GM12878 (cell line): ENCODE measurements at regions of chr9 and their contacts with region 1.

Region 1: DNA sequence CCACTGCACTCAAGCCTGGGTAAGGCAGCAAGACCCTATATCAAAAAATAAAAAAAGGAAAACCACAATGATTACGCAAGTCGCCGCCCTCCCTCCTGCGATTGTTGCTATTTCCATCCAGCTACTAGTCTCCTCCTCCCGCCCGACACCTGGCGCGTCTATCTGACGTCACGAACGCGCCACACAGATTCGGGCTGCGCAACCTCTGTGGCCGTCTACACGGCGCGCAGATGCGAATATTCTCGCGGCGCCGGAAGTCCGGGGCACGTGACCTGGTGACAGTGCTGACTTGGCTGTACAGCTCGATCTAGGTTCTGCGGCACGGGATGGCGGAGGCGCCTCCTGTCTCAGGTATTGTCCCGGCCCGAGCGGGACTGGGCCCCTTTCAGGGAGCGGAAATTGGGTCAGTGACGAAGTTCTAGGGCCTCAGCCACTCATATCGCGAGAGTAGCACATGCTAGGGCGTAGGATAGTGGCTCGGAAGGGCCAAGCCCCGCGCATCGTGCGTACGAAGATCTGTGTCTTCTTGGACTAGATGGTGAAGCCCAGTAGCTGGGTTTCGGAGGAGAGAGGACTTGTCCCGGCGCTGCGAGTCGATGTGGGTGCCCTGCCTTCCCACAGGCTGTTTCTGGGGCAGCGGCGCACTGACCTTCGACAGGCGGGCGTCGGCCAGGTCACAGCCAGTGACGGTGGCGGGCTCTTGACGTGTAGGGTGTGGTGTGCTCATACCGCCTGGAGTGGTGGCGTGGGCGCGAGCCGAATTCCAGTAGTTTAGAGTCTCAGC is at the start of gene NFX1:
- DNase-seq: peak; percentile 94
- ATAC-seq: peak; percentile 92
- H3K4me3 ChIP-seq: peak within 1 kb of the TSS; percentile 77
- H3K27ac ChIP-seq: peak within 1 kb of the TSS; percentile 100
- H3K4me1 ChIP-seq: peaks cover 16% of the 10 kb centered on the region
- H3K27me3 ChIP-seq: no peaks in the 10 kb centered on the region
- CTCF ChIP-seq: no peak
- EP300 ChIP-seq: peak in 1 of 2 experiments; percentile 43; a peak in 1 of 4 replicates
- POLR2A ChIP-seq: peak; percentile 98
- RAD21 ChIP-seq: no peak
- polyA plus RNA-seq, gene NFX1: 11.9 to 18.6 TPM

Region 2: DNA sequence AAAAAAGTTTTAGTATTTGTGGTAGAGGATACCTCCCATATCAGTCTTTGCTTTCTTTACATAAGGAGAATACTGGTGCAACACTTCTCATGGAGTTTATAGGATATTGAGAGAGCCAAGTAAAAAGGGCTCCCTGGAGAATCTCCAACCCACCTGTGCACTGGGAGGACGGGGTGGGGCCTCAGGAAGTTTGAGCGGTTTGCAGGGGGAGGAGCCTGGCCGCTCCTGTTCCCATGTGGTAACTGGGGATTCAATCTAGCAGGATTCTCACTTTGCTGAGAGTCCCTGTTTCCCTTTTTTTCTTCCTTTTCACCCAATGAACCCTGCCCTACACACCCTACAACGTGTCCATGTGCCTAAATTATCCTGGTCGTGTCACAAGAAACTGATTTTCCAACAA is 371.8 kb before region 1 on chr9:
- CTCF ChIA-PET with region 1: no interaction called
- POLR2A ChIA-PET with region 1: no interaction called
- RAD21 ChIA-PET with region 1: no interaction called
- SMC1A ChIA-PET with region 1: no interaction called
- in situ Hi-C with region 1: no loop called
- intact Hi-C with region 1: no loop called
- DNase-seq: no peak
- ATAC-seq: no peak
- H3K4me3 ChIP-seq: no peak overlapping the region
- H3K27ac ChIP-seq: no peak overlapping the region
- H3K4me1 ChIP-seq: no peaks in the 10 kb centered on the region
- H3K27me3 ChIP-seq: no peaks in the 10 kb centered on the region; a peak in 1 of 4 replicates
- CTCF ChIP-seq: no peak
- EP300 ChIP-seq: no peak
- POLR2A ChIP-seq: no peak
- RAD21 ChIP-seq: no peak

Region 3: DNA sequence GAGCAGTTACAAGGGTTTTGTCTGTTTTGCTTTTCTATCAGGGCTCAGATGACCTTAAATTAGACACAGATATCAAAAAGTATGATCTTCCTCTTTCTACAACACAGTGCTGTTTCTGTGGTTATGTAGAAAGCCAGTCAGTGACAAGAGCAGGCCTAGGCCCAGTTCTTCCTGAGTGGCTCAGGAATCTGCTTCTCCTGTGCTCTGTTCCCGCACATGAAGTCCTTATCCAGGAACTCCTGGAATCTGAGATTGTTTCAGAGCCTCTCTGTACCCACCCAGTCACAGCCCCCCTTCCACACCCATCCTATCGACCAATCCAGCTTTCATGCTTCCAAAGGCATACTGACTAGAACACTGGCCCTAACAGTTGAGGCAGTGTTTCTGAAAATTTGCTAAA is 173.6 kb before region 1 on chr9:
- CTCF ChIA-PET with region 1: no interaction called
- POLR2A ChIA-PET with region 1: no interaction called
- RAD21 ChIA-PET with region 1: no interaction called
- SMC1A ChIA-PET with region 1: no interaction called
- in situ Hi-C with region 1: no loop called
- intact Hi-C with region 1: no loop called
- DNase-seq: no peak
- ATAC-seq: peak; percentile 62
- H3K4me3 ChIP-seq: 0 out of 2 replicates have a peak overlapping the region, but pooled peaks have one; percentile 29
- H3K27ac ChIP-seq: peak overlapping the region; percentile 45
- H3K4me1 ChIP-seq: peaks cover 13% of the 10 kb centered on the region
- H3K27me3 ChIP-seq: no peaks in the 10 kb centered on the region
- CTCF ChIP-seq: no peak
- EP300 ChIP-seq: no peak
- POLR2A ChIP-seq: no peak
- RAD21 ChIP-seq: no peak

Region 4: DNA sequence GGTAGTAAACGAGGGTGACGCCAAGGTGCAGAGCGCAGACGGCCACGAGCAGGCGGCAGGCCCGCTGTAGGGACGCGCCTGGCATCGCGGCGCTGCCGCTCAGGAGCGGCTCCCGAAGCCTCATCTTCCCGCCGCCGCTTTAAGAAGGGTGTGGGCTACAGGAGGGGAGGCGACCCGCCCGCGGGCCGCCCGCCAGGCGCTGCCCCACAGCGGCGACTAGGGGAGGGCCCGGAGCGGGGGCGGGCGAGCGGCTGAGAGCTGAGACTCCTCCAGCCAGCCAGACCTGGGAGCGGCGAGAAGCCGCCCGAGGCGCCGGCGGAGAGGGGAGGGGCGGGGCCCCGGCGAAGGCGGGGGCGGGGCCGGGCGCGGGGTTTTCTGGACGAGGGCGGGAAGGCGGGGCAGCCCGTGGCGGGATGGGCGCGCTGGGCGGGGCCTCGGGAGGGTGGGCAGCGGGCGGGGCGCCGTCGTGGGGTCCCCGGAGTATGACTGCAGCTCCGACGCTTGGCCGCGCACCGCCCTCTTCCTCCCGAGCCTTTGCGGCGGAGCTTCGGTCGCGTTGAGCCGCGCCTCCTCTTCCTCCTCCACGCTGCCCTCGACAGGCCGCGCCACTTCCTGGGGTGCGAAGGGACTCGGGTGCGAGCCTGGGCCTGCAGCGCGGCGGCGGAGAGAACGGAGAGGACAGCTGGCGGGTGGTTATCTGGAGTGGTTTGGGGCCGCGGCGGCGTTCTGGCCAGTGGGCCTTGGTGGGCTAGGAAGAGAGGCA is 123.2 kb before region 1 on chr9 and contains the start of gene B4GALT1:
- CTCF ChIA-PET with region 1: no interaction called
- POLR2A ChIA-PET with region 1: no interaction called
- RAD21 ChIA-PET with region 1: interaction called, 3 read pairs
- SMC1A ChIA-PET with region 1: no interaction called
- in situ Hi-C with region 1: no loop called
- intact Hi-C with region 1: loop called (anchors 10 kb)
- DNase-seq: peak; percentile 75
- ATAC-seq: peak; percentile 69
- H3K4me3 ChIP-seq: peak within 1 kb of the TSS; percentile 90
- H3K27ac ChIP-seq: peak within 1 kb of the TSS; percentile 92
- H3K4me1 ChIP-seq: peaks cover 32% of the 10 kb centered on the region
- H3K27me3 ChIP-seq: no peaks in the 10 kb centered on the region
- CTCF ChIP-seq: 0 out of 6 replicates have a peak, but pooled peaks of 1 of the 3 experiments have one; percentile 1
- EP300 ChIP-seq: 0 out of 4 replicates have a peak, but pooled peaks of 1 of the 2 experiments have one; percentile 11
- POLR2A ChIP-seq: peak; percentile 93
- RAD21 ChIP-seq: peak; percentile 25; the same call in 1 of the 2 replicates
- polyA plus RNA-seq, gene B4GALT1: 22.4 to 23.3 TPM

Region 5: GRCh38 chr9:33272061-33272460 is 18.4 kb before region 1 on chr9:
- CTCF ChIA-PET with region 1: interaction called, 13 read pairs
- POLR2A ChIA-PET with region 1: interaction called, 4 read pairs
- RAD21 ChIA-PET with region 1: interaction called, 5 read pairs
- SMC1A ChIA-PET with region 1: interaction called, 5 read pairs
- in situ Hi-C with region 1: no loop called
- intact Hi-C with region 1: no loop called
- DNase-seq: no peak
- ATAC-seq: no peak
- H3K4me3 ChIP-seq: no peak overlapping the region
- H3K27ac ChIP-seq: no peak overlapping the region
- H3K4me1 ChIP-seq: no peaks in the 10 kb centered on the region; the same call in 1 of the 2 replicates
- H3K27me3 ChIP-seq: no peaks in the 10 kb centered on the region
- CTCF ChIP-seq: no peak
- EP300 ChIP-seq: no peak
- POLR2A ChIP-seq: no peak
- RAD21 ChIP-seq: no peak

Region 6: DNA sequence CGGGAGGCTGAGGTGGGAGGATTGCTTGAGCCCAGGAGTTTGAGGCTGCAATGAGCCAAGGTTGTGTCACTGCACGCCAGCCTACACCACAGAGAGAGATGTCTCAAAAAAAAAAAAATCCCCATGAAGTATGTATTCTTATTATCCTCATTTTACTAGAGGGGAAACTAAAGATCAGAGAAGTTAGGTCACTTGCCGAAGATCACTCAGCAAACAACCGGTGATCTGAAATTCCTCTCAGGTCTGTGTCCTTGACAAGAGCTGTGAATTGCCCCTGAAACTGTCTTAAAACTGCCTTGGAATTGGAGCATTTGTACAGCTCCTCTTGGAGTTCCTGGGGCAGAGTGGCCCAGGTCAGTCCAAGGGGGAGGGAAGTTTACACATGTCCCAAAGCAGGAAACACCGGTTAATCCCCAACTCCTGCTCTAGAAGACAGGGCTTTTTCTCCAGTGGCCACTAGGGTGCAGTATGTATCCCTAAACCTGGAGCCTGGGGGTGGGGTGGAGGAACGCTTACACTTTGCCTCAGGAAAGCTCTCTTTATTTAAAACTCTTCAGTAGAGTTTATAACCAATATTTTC is 84.3 kb after region 1 on chr9:
- CTCF ChIA-PET with region 1: interaction called, 7 read pairs
- POLR2A ChIA-PET with region 1: no interaction called
- RAD21 ChIA-PET with region 1: interaction called, 4 read pairs
- SMC1A ChIA-PET with region 1: interaction called, 10 read pairs
- in situ Hi-C with region 1: no loop called
- intact Hi-C with region 1: no loop called
- DNase-seq: no peak
- ATAC-seq: peak; percentile 92
- H3K4me3 ChIP-seq: no peak overlapping the region
- H3K27ac ChIP-seq: no peak overlapping the region
- H3K4me1 ChIP-seq: no peaks in the 10 kb centered on the region
- H3K27me3 ChIP-seq: no peaks in the 10 kb centered on the region
- CTCF ChIP-seq: peak; percentile 80 to 92 (median 88)
- EP300 ChIP-seq: no peak
- POLR2A ChIP-seq: no peak
- RAD21 ChIP-seq: peak; percentile 78

Region 7: DNA sequence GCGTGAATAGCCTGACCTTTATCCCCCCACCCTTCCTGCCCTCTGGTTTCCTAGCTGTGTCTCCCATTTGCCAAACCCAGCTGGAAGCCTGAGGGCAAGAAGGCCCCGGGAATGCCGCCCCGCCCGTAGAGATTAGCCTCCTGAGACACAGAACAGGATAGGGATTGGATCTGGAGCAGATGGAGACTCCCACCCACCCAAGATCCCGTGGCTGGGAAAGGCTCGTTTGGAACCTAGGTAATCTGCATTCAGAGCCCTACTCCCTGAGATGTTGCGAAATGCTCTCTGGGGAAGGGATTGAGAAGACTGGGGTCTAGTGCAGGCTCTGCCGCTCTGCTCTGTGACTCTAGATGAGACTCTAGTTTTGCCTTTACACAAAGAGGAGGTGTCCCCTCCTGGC is 146.0 kb after region 1 on chr9:
- CTCF ChIA-PET with region 1: no interaction called
- POLR2A ChIA-PET with region 1: no interaction called
- RAD21 ChIA-PET with region 1: no interaction called
- SMC1A ChIA-PET with region 1: no interaction called
- in situ Hi-C with region 1: no loop called
- intact Hi-C with region 1: no loop called
- DNase-seq: no peak
- ATAC-seq: no peak
- H3K4me3 ChIP-seq: no peak overlapping the region
- H3K27ac ChIP-seq: no peak overlapping the region
- H3K4me1 ChIP-seq: no peaks in the 10 kb centered on the region; the same call in 1 of the 2 replicates
- H3K27me3 ChIP-seq: peaks cover 5 to 6% of the 10 kb centered on the region in 2 experiments
- CTCF ChIP-seq: no peak
- EP300 ChIP-seq: no peak
- POLR2A ChIP-seq: no peak
- RAD21 ChIP-seq: no peak

Region 8: GRCh38 chr9:33466565-33467495 is 176.4 kb after region 1 on chr9:
- CTCF ChIA-PET with region 1: interaction called, 15 read pairs
- POLR2A ChIA-PET with region 1: no interaction called
- RAD21 ChIA-PET with region 1: interaction called, 6 read pairs
- SMC1A ChIA-PET with region 1: interaction called, 9 read pairs
- in situ Hi-C with region 1: no loop called
- intact Hi-C with region 1: no loop called
- DNase-seq: no peak
- ATAC-seq: peak; percentile 91
- H3K4me3 ChIP-seq: no peak overlapping the region
- H3K27ac ChIP-seq: no peak overlapping the region
- H3K4me1 ChIP-seq: peaks cover under 1% of the 10 kb centered on the region
- H3K27me3 ChIP-seq: no peaks in the 10 kb centered on the region
- CTCF ChIP-seq: peak; percentile 81 to 99 (median 98)
- EP300 ChIP-seq: no peak
- POLR2A ChIP-seq: no peak
- RAD21 ChIP-seq: peak; percentile 84